Activated CD4-positive, alpha-beta T cell treated with anti-CD3 and anti-CD28 coated beads for 36 hours (primary cell): ENCODE measurements at regions of chr6 and their contacts with region 1.

Region 1: GRCh38 chr6:31619805-31620585 is 520 bp upstream of the PRRC2A start:
- DNase-seq: peak; percentile 98
- ATAC-seq: peak; percentile 82
- H3K4me3 Mint-ChIP-seq: peak overlapping the region; percentile 95
- H3K27ac Mint-ChIP-seq: peak overlapping the region; percentile 97
- H3K4me1 Mint-ChIP-seq: peaks cover 52% of the 10 kb centered on the region
- H3K27me3 Mint-ChIP-seq: no peaks in the 10 kb centered on the region

Region 2: DNA sequence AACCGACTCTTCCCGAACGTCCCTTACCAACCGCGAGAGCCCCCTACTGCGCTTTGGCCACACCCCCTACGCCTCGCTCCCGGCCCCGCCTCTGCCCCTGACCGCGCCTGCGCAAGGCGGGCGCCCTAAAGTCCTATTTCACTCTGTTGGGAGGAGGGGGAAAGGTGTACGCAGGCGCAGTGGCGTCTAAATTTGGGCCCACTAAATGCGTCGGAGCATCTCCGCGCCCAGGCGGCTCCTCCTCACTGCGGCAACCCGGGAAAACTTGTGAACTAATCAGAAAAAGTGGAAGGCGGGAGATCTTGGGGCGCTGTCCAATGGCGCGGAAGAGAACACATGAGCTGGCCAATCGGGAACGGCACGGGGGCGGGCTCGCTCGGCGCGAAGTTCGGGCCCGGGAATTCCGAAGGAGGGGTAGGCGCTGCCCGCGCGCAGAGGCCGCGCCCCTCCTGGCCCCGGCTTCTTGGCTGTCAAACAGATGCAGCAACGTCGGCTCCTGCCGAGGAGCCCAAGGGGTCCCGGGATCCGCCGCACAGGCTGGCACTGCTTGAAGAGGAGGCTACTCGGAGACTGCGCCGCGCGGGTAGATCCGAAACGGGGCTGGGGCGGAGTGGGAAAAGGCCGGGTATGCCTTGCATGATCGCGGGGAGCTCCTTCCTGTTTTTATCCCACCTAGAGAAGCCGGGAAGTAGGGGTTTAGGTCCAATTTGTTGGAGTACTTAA is 461.7 kb before region 1 on chr6 and contains the start of gene TCF19:
- CTCF ChIA-PET with region 1: no interaction called
- POLR2A ChIA-PET with region 1: no interaction called
- intact Hi-C with region 1: loop called in 1 of 2 experiments (anchors 1 kb)
- DNase-seq: peak; percentile 99
- ATAC-seq: peak; percentile 90
- H3K4me3 Mint-ChIP-seq: peak within 1 kb of the TSS; percentile 97
- H3K27ac Mint-ChIP-seq: peak within 1 kb of the TSS; percentile 89
- H3K4me1 Mint-ChIP-seq: peaks cover 39% of the 10 kb centered on the region
- H3K27me3 Mint-ChIP-seq: no peaks in the 10 kb centered on the region
- total RNA-seq, gene TCF19: 82.6 to 88.0 TPM

Region 3: GRCh38 chr6:31252625-31253024 is 367.4 kb before region 1 on chr6:
- CTCF ChIA-PET with region 1: no interaction called
- POLR2A ChIA-PET with region 1: no interaction called
- intact Hi-C with region 1: no loop called
- DNase-seq: no peak
- ATAC-seq: no peak
- H3K4me3 Mint-ChIP-seq: no peak overlapping the region
- H3K27ac Mint-ChIP-seq: no peak overlapping the region
- H3K4me1 Mint-ChIP-seq: no peaks in the 10 kb centered on the region
- H3K27me3 Mint-ChIP-seq: peaks cover 3% of the 10 kb centered on the region

Region 4: GRCh38 chr6:31575335-31575901 is 44.6 kb before region 1 on chr6 and contains the start of gene TNF:
- CTCF ChIA-PET with region 1: interaction called, 8 read pairs
- POLR2A ChIA-PET with region 1: interaction called, 8 read pairs
- intact Hi-C with region 1: loop called in 1 of 2 experiments (anchors 1 kb)
- DNase-seq: peak; percentile 89
- ATAC-seq: peak; percentile 23
- H3K4me3 Mint-ChIP-seq: peak within 1 kb of the TSS; percentile 97
- H3K27ac Mint-ChIP-seq: peak within 1 kb of the TSS; percentile 98
- H3K4me1 Mint-ChIP-seq: peaks cover 73% of the 10 kb centered on the region
- H3K27me3 Mint-ChIP-seq: no peaks in the 10 kb centered on the region
- total RNA-seq, gene TNF: 82.3 to 93.3 TPM

Region 5: GRCh38 chr6:31660381-31661261 is 40.6 kb after region 1 on chr6 and contains the start of gene C6orf47:
- CTCF ChIA-PET with region 1: no interaction called
- POLR2A ChIA-PET with region 1: interaction called, 4 read pairs
- intact Hi-C with region 1: loop called (anchors 1 kb)
- DNase-seq: peak; percentile 86
- ATAC-seq: peak; percentile 48
- H3K4me3 Mint-ChIP-seq: peak within 1 kb of the TSS; percentile 88
- H3K27ac Mint-ChIP-seq: peak within 1 kb of the TSS; percentile 93
- H3K4me1 Mint-ChIP-seq: peaks cover 64% of the 10 kb centered on the region
- H3K27me3 Mint-ChIP-seq: no peaks in the 10 kb centered on the region
- total RNA-seq, gene C6orf47: 10.1 to 11.7 TPM

Region 6: DNA sequence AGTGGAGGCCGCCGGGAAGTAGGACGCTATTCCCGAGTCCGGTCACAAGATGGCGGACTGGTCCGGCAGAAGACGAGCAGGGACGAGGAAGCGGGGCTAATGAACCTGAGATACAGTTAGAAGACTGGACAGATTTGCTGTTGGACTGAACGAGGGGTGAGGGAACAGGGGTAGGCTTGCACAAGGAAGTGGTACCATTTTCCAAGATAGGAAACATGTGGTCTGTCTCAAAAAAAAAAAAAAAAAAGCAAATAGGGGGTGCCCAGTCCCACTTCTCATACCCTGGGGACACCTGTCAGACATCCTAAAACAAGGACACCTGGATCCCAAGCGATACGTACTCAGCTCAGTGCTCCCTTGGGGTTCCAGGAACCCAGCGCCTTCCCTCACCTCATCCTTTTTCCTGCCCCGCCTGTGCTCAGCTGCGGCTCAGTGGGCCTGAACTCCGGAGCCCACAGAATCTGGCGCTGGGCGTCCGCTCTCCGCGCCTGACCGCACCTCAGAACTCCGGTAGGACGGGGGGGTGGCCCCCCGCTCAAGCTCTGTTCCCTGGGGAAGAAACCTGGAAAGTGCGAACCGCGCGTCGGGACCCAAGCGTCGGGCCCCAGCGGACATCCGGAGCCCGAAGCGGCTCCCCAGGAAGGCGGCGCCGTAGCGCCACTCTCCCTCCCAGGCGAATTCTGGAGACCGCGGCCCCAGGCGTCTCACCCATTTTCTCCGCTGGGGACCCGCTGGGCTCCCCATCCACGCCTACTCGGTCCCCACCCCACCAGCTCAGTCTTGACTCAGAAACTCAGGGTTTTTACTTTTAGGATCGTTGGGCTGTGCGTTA is 61.1 kb after region 1 on chr6 and contains the start of gene LY6G5C:
- CTCF ChIA-PET with region 1: no interaction called
- POLR2A ChIA-PET with region 1: no interaction called
- intact Hi-C with region 1: no loop called
- DNase-seq: peak; percentile 80
- ATAC-seq: peak; percentile 80
- H3K4me3 Mint-ChIP-seq: peak within 1 kb of the TSS; percentile 66
- H3K27ac Mint-ChIP-seq: peak within 1 kb of the TSS; percentile 49
- H3K4me1 Mint-ChIP-seq: peaks cover 15% of the 10 kb centered on the region
- H3K27me3 Mint-ChIP-seq: no peaks in the 10 kb centered on the region
- total RNA-seq, gene LY6G5C: 1.2 to 1.5 TPM

Region 7: GRCh38 chr6:31827286-31828079 is 207.5 kb after region 1 on chr6 and contains the start of gene HSPA1B:
- CTCF ChIA-PET with region 1: no interaction called
- POLR2A ChIA-PET with region 1: interaction called, 4 read pairs
- intact Hi-C with region 1: loop called in 1 of 2 experiments (anchors 1 kb)
- DNase-seq: peak; percentile 97
- ATAC-seq: peak; percentile 83
- H3K4me3 Mint-ChIP-seq: peak within 1 kb of the TSS; percentile 77
- H3K27ac Mint-ChIP-seq: peak within 1 kb of the TSS; percentile 92
- H3K4me1 Mint-ChIP-seq: peaks cover 43% of the 10 kb centered on the region
- H3K27me3 Mint-ChIP-seq: no peaks in the 10 kb centered on the region
- total RNA-seq, gene HSPA1B: 54.6 to 61.1 TPM

Region 8: DNA sequence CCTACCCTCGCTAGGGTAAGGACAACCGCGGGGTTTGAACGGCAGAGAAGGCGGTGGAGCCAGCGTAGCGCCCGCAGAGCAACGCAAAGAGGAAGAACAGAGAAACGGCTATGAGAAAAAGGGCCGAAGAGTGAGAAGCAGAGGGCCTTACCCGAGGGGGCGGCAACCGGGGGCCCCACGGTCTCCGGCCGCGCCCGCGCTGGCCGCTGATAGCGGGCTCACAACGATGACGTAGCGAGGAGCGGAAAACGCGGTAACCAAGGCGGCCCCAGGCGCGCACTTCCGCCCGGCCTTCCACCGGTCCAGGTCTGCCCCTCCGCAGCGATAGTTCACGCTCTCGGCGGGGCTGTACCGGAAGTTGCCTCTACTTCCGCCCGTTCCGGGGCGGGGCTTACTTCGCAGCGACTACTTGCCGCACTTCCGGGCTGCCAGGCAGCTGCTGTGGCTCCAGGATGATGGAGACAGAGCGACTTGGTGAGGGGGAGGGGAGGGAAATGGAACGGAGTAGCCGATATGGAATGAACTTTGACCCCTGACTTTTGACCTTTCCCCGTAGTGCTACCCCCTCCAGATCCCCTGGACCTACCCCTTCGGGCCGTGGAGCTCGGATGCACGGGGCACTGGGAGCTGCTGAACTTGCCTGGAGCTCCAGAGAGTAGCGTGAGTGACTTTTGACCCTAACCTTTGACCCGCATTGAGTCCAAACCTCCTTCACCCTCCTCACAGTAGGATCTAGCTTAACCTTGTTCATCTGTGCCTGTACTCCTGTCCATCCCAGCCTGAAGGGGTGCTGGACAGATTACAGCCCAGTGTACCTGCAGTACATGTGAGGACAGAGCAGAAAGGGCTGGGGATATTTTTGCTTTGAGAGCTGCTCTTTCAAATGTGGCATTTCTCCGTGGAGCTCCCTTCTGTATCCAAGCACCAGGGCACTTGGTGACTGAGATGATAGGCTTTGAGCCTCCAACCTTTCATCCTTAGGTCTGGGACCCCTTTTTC is 339.0 kb after region 1 on chr6 and contains the starts of genes NELFE and SKIC2:
- CTCF ChIA-PET with region 1: no interaction called
- POLR2A ChIA-PET with region 1: no interaction called
- intact Hi-C with region 1: loop called in 1 of 2 experiments (anchors 1 kb)
- DNase-seq: peak; percentile 99
- ATAC-seq: peak; percentile 99
- H3K4me3 Mint-ChIP-seq: peak within 1 kb of the TSS; percentile 95
- H3K27ac Mint-ChIP-seq: peak within 1 kb of the TSS; percentile 98
- H3K4me1 Mint-ChIP-seq: peaks cover 34% of the 10 kb centered on the region
- H3K27me3 Mint-ChIP-seq: no peaks in the 10 kb centered on the region
- total RNA-seq, gene NELFE: 74.3 to 95.1 TPM
- total RNA-seq, gene SKIC2: 90.2 to 104 TPM

Region 9: DNA sequence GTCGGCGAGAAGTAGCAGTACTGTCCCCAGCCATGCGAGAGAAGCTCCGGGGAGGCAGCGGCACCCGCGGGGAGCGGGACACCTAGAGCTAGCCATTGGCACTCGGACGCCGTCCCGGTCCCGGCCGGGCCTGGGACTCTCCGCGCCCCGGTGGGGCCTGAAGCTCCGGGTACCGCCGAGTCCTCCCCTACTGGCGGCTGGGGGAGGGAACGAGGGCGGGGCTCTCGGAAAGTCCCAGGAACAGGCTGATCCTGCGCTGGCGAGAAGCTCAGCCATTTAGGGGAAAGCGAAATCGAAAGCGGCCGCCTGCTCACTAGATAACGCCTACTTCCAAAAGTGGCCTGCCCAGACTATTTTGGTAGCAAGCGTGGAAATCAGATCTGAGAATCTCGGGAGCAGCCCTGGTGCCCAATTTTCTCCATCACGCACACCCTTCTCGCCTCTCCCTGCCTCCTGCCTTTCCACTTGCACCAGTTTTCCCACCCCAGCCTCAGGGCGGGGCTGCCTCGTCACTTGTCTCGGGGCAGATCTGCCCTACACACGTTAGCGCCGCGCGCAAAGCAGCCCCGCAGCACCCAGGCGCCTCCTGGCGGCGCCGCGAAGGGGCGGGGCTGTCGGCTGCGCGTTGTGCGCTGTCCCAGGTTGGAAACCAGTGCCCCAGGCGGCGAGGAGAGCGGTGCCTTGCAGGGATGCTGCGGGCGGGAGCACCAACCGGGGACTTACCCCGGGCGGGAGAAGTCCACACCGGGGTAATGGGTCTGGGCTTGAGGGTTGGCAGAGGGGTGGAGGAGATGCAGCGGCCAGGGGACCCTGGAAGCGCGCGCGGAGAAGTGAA is 1233.8 kb after region 1 on chr6 and contains the starts of genes PSMB9 and TAP1:
- CTCF ChIA-PET with region 1: no interaction called
- POLR2A ChIA-PET with region 1: no interaction called
- intact Hi-C with region 1: loop called in 1 of 2 experiments (anchors 2 kb)
- DNase-seq: peak; percentile 98
- ATAC-seq: peak; percentile 84
- H3K4me3 Mint-ChIP-seq: peak within 1 kb of the TSS; percentile 100
- H3K27ac Mint-ChIP-seq: peak within 1 kb of the TSS; percentile 99
- H3K4me1 Mint-ChIP-seq: peaks cover 62% of the 10 kb centered on the region
- H3K27me3 Mint-ChIP-seq: no peaks in the 10 kb centered on the region
- total RNA-seq, gene PSMB9: 210 to 282 TPM
- total RNA-seq, gene TAP1: 191 to 255 TPM